Activated T-helper 2 cell treated with anti-CD3 and anti-CD28 coated beads, Interferon-gamma antibody, Interleukin-2, Interleukin-4, amounts not matched to agents 10 μg/mL and 5 μg/mL and 100 μg/mL, durations not matched to agents 14 hours and 24 hours and 36 hours (primary cell): ENCODE measurements at regions of chr20 and their contacts with region 1.

Region 1: GRCh38 chr20:45971675-45972499 is at the start of gene ZNF335:
- DNase-seq: peak; percentile 93
- H3K4me3 Mint-ChIP-seq: peak within 1 kb of the TSS; percentile 85
- H3K27ac Mint-ChIP-seq: peak within 1 kb of the TSS; percentile 99
- H3K4me1 Mint-ChIP-seq: peaks cover 10% of the 10 kb centered on the region
- H3K27me3 Mint-ChIP-seq: peaks cover 7% of the 10 kb centered on the region
- total RNA-seq, gene ZNF335: 35.7 and 36.1 TPM in 2 replicates

Region 2: GRCh38 chr20:45812157-45813020 is 159.5 kb before region 1 on chr20 and contains the start of gene UBE2C:
- intact Hi-C with region 1: loop called (anchors 2 kb)
- DNase-seq: peak; percentile 96
- H3K4me3 Mint-ChIP-seq: peak within 1 kb of the TSS; percentile 90
- H3K27ac Mint-ChIP-seq: peak within 1 kb of the TSS; percentile 80
- H3K4me1 Mint-ChIP-seq: peaks cover 24% of the 10 kb centered on the region
- H3K27me3 Mint-ChIP-seq: no peaks in the 10 kb centered on the region
- total RNA-seq, gene UBE2C: 142 and 145 TPM in 2 replicates

Region 3: DNA sequence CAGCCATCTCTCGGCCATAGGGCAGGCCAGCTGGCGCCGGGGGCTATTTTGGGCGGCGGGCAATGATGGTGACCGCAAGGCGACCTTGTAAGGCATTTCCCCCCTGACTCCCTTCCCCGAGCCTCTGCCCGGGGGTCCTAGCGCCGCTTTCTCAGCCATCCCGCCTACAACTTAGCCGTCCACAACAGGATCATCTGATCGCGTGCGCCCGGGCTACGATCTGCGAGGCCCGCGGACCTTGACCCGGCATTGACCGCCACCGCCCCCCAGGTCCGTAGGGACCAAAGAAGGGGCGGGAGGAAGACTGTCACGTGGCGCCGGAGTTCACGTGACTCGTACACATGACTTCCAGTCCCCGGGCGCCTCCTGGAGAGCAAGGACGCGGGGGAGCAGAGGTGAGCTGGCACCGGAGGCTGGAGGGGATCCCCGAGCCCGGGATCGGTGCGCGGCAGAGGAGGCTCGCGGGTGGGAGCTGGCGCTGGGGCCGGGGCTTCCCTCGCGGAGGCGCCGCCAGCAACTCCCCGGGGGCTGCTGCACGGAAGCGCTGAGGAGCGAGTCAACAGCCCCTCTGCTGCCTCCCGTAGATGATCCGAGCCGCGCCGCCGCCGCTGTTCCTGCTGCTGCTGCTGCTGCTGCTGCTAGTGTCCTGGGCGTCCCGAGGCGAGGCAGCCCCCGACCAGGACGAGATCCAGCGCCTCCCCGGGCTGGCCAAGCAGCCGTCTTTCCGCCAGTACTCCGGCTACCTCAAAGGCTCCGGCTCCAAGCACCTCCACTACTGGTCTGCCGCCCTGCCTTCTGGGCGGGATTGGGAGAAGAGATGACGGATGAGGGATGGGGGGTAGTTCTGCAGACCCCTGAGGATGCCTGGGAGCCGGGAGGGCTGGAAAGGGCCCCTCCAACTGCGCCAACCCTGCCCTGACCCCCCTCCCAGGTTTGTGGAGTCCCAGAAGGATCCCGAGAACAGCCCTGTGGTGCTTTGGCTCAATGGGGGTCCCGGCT is 80.6 kb before region 1 on chr20 and contains the starts of genes CTSA and NEURL2:
- intact Hi-C with region 1: loop called (anchors 10 kb)
- DNase-seq: peak; percentile 78
- H3K4me3 Mint-ChIP-seq: peak within 1 kb of the TSS; percentile 87
- H3K27ac Mint-ChIP-seq: peak within 1 kb of the TSS; percentile 84
- H3K4me1 Mint-ChIP-seq: peaks cover 25% of the 10 kb centered on the region
- H3K27me3 Mint-ChIP-seq: no peaks in the 10 kb centered on the region
- total RNA-seq, gene CTSA: 49.0 and 51.9 TPM in 2 replicates
- total RNA-seq, gene NEURL2: 2.0 and 3.3 TPM in 2 replicates

Region 4: DNA sequence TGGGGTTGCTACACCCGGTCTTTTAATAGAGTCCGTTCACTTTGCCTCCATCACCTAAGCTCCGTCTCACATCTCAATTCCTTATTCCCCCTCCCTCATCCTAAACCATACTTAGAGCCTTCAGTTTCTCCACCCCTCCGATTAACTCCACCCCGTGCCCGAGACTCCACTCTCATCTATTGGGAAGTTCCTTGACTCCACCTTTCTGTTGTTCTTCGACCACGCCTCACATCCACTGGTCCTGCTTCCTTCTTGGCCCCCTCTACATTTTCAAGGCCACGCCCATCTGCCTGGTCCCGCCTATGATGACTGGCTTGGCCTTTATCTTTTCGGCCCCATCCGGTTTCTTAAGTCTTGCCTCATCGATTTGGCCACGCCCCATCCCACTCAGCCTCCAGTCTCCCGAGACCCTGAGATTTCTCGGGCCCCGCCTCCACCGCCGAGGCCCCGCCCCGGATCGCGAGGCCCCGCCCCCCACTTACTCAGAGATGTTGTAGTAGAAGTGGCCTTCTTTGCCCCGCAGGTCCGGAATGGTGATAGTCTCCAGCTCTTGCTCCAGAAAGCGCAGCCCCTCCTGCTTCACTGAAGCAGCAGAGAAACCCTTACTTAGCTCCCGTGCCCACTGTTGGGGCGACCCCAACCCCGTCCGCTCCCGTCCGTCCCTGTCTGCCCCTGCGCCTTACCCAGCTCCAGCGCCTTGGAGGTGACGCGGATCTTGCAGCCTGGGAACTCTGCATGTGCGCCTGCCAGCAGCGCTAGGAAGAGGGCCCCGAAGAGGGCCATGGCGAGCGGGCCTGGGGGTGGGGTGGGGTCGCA is 61.0 kb before region 1 on chr20:
- intact Hi-C with region 1: loop called (anchors 2 kb)
- DNase-seq: peak; percentile 89
- H3K4me3 Mint-ChIP-seq: peak overlapping the region; percentile 72
- H3K27ac Mint-ChIP-seq: peak overlapping the region; percentile 85
- H3K4me1 Mint-ChIP-seq: peaks cover 7% of the 10 kb centered on the region
- H3K27me3 Mint-ChIP-seq: peaks cover 6% of the 10 kb centered on the region

Region 5: DNA sequence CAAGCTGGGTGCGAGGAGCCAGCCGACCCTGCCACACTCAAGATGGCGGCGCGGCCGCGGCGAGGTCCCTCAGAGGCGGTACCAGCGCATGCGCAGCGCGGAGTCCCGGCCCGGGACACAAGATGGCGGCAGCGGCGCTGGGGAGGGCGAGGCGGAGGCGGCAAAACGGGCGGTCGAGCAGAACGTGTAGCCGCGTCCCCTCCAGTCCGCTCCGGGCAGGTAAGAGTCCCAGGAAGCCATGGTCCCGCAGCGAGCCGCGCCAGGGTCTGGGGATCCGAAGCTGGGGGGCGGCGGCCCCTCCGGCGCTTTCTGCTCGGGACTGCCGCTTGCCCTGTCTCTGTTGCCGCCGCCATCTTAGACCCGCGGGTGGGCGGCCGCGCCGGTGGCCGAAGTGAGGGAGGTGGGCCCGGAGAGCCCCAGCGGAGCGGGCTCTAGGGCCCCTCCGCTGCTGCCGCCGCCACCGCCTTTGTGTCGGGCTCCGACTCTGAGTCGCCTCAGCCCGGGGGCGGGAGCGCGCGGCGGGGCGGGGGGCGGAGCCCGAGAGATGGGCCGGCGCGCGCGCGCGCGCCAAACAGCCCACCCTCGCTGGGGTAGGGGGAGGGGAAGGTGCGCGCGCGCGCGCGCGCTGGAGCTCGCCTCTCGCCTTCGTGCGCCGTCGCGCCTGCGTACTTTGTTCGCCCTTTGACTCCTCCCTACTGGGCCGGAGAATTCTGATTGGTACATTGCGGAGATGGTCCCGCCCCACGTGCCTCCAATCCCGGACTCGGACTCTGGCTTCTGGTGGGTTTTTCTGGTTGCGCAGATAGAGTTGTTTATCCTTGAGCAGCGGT is 37.1 kb before region 1 on chr20 and contains the start of gene PCIF1:
- intact Hi-C with region 1: loop called (anchors 1 kb)
- DNase-seq: peak; percentile 97
- H3K4me3 Mint-ChIP-seq: peak within 1 kb of the TSS; percentile 92
- H3K27ac Mint-ChIP-seq: peak within 1 kb of the TSS; percentile 94
- H3K4me1 Mint-ChIP-seq: peaks cover 25% of the 10 kb centered on the region
- H3K27me3 Mint-ChIP-seq: no peaks in the 10 kb centered on the region
- total RNA-seq, gene PCIF1: 27.5 and 28.6 TPM in 2 replicates

Region 6: DNA sequence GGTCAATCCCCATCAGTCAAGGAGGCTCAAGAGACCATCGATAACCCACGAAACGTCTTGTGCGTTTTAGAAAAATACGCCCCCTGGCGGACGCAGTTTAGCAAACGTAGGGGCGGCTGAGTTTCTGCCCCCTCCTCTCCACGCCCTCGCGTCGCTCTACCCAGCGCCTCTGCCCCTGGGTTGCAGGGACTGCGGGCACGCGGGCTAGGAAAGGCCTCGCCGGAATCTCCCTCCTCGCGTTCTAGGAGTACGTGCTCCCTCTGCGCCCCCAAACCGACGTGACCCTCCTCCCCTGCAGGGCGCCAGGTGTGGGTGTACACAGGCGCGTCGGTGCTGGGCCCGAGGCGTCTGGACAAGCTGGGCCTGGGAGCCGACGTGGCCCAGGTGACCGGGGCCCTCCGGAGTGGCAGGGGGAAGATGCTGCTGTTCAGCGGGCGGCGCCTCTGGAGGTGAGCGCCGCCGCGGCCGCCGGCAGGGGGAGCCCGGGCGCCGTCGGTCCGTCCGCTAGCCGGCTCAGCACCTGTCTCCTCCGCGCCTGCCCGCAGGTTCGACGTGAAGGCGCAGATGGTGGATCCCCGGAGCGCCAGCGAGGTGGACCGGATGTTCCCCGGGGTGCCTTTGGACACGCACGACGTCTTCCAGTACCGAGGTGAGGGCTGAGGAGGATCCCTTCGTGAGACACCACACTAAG is 42.1 kb after region 1 on chr20:
- intact Hi-C with region 1: loop called (anchors 5 kb)
- DNase-seq: peak; percentile 49
- H3K4me3 Mint-ChIP-seq: peak overlapping the region; percentile 34
- H3K27ac Mint-ChIP-seq: no peak overlapping the region
- H3K4me1 Mint-ChIP-seq: peaks cover 37% of the 10 kb centered on the region
- H3K27me3 Mint-ChIP-seq: peaks cover 60% of the 10 kb centered on the region

Region 7: DNA sequence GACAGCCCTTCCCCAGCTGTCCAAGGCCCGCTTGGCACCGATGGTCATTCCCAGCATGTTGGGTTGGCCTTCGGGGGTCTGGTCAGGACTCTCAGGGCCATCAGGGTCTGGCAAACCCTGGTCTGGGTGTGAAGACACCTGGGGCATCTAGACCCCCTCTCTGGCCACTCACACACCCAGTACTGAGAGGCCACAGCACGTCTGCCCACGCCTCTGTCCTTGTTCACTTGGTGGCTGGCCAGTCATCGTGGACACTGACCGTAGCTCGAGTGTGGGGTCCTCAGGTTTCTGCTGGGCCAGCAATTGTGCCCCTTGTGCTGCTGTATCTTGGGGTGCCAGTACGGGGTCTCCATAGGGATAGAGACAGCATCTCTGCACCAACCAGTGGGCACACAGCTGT is 1867.3 kb after region 1 on chr20:
- intact Hi-C with region 1: no loop called
- DNase-seq: no peak
- H3K4me3 Mint-ChIP-seq: no peak overlapping the region
- H3K27ac Mint-ChIP-seq: no peak overlapping the region
- H3K4me1 Mint-ChIP-seq: no peaks in the 10 kb centered on the region
- H3K27me3 Mint-ChIP-seq: peaks cover 2% of the 10 kb centered on the region